K562 (cell line): ENCODE measurements at regions of chr11 and their contacts with region 1.

Region 1: DNA sequence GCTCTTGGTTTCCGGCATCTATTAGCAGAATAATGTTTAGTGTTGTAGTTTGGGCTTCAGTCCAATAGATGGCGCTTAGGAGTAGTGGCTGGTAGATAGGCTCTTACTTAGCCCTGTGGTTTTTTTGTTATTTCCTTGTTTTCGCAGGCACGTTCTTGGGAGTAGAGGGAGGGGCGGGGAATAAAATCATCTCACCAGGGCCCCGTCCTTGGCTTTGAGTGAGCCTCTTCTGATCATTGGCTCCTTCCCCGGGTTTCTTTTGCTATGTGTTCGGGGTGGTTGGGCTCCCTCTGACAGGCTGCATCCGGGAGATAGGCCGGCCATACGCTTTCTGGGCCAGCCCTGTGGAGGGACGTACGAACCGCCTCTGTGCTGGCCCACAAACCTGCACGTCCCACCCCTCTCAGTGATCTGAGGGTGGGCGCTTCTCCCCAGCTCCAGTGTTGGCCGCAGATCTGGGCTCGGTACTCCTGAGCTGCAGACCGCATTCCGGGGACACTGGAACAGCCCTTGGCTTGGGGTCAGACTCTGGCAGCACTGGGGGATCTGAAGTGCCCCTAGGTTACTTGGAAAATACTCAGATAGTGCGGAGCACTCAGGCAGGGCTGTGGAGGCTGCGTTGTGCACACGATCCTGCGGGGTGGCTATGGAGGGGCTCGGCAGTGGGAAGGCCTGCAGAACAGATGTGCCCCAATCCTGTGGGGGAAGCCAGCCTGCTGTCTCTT is 217.0 kb downstream of the DYNC2H1 start:
- DNase-seq: peak; percentile 10 to 26 (median 10)
- ATAC-seq: peak; percentile 63
- H3K4me3 ChIP-seq: no peak overlapping the region
- H3K27ac ChIP-seq: no peak overlapping the region
- H3K4me1 ChIP-seq: no peaks in the 10 kb centered on the region
- H3K27me3 ChIP-seq: no peaks in the 10 kb centered on the region
- CTCF ChIP-seq: peak; percentile 26 to 50 (median 47); a peak in 5 of 6 replicates
- EP300 ChIP-seq: no peak
- POLR2A ChIP-seq: no peak
- RAD21 ChIP-seq: peak in 1 of 2 experiments; percentile 48; a peak in 3 of 4 replicates

Region 2: GRCh38 chr11:103601225-103601846 is 275.1 kb after region 1 on chr11:
- CTCF ChIA-PET with region 1: interaction called, 3 read pairs
- POLR2A ChIA-PET with region 1: no interaction called
- in situ Hi-C with region 1: no loop called
- intact Hi-C with region 1: loop called (anchors 1 kb)
- DNase-seq: peak; percentile 25 to 55 (median 41)
- ATAC-seq: peak; percentile 60; the same call in 2 of the 3 replicates
- H3K4me3 ChIP-seq: no peak overlapping the region
- H3K27ac ChIP-seq: no peak overlapping the region
- H3K4me1 ChIP-seq: no peaks in the 10 kb centered on the region
- H3K27me3 ChIP-seq: no peaks in the 10 kb centered on the region
- CTCF ChIP-seq: peak; percentile 48 to 57 (median 55); a peak in 5 of 6 replicates
- EP300 ChIP-seq: no peak
- POLR2A ChIP-seq: no peak
- RAD21 ChIP-seq: peak; percentile 49 to 60

Region 3: DNA sequence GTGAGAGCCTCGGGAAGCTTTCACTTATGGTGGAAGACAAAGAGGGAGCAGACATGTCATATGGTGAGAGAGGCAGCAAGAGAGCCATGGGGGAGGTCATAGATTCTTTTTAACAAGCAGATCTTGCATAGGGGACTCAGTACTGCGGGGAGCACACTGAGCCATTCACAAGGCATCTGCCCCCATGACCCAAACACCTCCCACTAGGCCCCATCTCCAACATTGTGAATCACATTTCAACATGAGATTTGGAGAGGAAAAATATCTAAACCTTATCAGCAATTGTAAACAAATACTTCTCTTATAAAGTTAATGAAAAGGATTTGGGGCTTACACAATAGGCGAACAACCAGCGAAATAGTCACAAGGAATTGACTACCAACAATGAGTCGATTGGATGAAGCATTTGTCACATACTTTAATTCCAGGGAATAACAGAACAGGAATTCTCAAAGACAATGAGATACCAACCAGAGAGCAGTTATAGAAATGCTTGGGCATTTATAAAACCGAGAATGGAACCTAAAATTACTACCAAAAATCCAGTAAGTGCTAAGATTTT is 717.5 kb after region 1 on chr11:
- CTCF ChIA-PET with region 1: no interaction called
- POLR2A ChIA-PET with region 1: no interaction called
- in situ Hi-C with region 1: no loop called
- intact Hi-C with region 1: no loop called
- DNase-seq: no peak
- ATAC-seq: no peak
- H3K4me3 ChIP-seq: no peak overlapping the region
- H3K27ac ChIP-seq: no peak overlapping the region
- H3K4me1 ChIP-seq: no peaks in the 10 kb centered on the region
- H3K27me3 ChIP-seq: no peaks in the 10 kb centered on the region
- CTCF ChIP-seq: no peak
- EP300 ChIP-seq: no peak
- POLR2A ChIP-seq: no peak
- RAD21 ChIP-seq: no peak